Activated T-helper 1 cell treated with anti-CD3 and anti-CD28 coated beads, Interleukin-12 subunit alpha, Interleukin-12 subunit beta, Interleukin-2, Interleukin-4 antibody, amounts not matched to agents 30 ng/mL and 10 ng/mL and 1 ng/mL, durations not matched to agents 14 hours and 24 hours and 36 hours (primary cell): ENCODE measurements at regions of chr1 and their contacts with region 1.

Region 1: GRCh38 chr1:38873027-38873969 is at the start of gene MYCBP:
- DNase-seq: peak; percentile 98
- H3K4me3 Mint-ChIP-seq: peak within 1 kb of the TSS; percentile 87
- H3K27ac Mint-ChIP-seq: peak within 1 kb of the TSS; percentile 79
- H3K4me1 Mint-ChIP-seq: peaks cover 23% of the 10 kb centered on the region
- H3K27me3 Mint-ChIP-seq: no peaks in the 10 kb centered on the region
- total RNA-seq, gene MYCBP: 38.4 and 39.7 TPM in 2 replicates

Region 2: GRCh38 chr1:38012363-38013226 is 860.7 kb before region 1 on chr1 and contains the start of gene UTP11:
- intact Hi-C with region 1: loop called (anchors 1 kb)
- DNase-seq: peak; percentile 87
- H3K4me3 Mint-ChIP-seq: peak within 1 kb of the TSS; percentile 96
- H3K27ac Mint-ChIP-seq: peak within 1 kb of the TSS; percentile 93
- H3K4me1 Mint-ChIP-seq: peaks cover 54% of the 10 kb centered on the region
- H3K27me3 Mint-ChIP-seq: no peaks in the 10 kb centered on the region
- total RNA-seq, gene UTP11: 106 and 108 TPM in 2 replicates

Region 3: GRCh38 chr1:38859561-38860453 is 13.5 kb before region 1 on chr1 and contains the start of gene RRAGC:
- intact Hi-C with region 1: loop called (anchors 1 kb)
- DNase-seq: peak; percentile 98
- H3K4me3 Mint-ChIP-seq: peak within 1 kb of the TSS; percentile 89
- H3K27ac Mint-ChIP-seq: peak within 1 kb of the TSS; percentile 74
- H3K4me1 Mint-ChIP-seq: peaks cover 41% of the 10 kb centered on the region
- H3K27me3 Mint-ChIP-seq: no peaks in the 10 kb centered on the region
- total RNA-seq, gene RRAGC: 12.9 and 13.4 TPM in 2 replicates

Region 4: DNA sequence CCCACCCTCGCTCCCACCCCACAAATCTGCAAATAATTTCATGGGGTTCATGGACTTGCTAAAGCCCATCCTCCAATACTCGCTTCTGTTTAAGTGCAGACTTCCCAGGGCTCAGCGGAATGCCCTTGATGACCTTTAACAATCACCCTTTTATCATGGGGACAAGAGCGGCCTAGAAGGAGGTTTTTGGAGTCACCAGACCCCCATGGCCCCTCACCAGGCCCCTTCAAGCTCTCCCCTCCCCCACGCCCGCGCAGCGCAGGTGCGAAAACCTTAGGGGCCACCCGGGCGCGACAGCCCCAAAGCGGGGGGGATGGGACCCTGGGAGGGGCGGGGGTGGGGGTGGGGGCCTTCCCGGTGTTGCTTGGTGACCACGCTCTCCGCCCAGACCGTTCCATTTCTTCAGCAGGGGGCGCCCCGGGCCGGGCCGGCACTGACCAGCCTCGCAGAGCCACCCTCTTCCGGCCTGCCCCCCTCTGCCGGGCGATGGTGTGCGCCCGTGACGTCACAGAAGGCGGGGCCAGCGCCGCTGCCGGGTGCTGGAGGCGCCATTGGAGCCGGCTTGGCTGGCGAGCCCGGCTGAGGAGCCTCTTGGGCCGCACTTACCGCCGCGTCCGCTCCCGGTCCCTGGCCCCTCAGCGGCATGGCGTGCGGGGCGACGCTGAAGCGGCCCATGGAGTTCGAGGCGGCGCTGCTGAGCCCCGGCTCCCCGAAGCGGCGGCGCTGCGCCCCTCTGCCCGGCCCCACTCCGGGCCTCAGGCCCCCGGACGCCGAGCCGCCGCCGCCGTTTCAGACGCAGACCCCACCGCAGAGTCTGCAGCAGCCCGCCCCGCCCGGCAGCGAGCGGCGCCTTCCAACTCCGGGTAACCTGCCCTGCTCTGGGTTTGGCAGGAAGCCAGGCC is 117.7 kb after region 1 on chr1 and contains the start of gene AKIRIN1:
- intact Hi-C with region 1: loop called (anchors 1 kb)
- DNase-seq: peak; percentile 97
- H3K4me3 Mint-ChIP-seq: peak within 1 kb of the TSS; percentile 90
- H3K27ac Mint-ChIP-seq: peak within 1 kb of the TSS; percentile 83
- H3K4me1 Mint-ChIP-seq: peaks cover 34% of the 10 kb centered on the region
- H3K27me3 Mint-ChIP-seq: no peaks in the 10 kb centered on the region
- total RNA-seq, gene AKIRIN1: 78.1 and 78.5 TPM in 2 replicates

Region 5: GRCh38 chr1:39491146-39491921 is 618.0 kb after region 1 on chr1 and contains the start of gene BMP8A:
- intact Hi-C with region 1: loop called (anchors 5 kb)
- DNase-seq: peak; percentile 69
- H3K4me3 Mint-ChIP-seq: peak within 1 kb of the TSS; percentile 75
- H3K27ac Mint-ChIP-seq: no peak within 1 kb of the TSS
- H3K4me1 Mint-ChIP-seq: peaks cover 11% of the 10 kb centered on the region
- H3K27me3 Mint-ChIP-seq: peaks cover 30% of the 10 kb centered on the region
- total RNA-seq, gene BMP8A: not detected in 2 replicates